H1 (cell line): ENCODE measurements at regions of chr17 and their contacts with region 1.

Region 1: DNA sequence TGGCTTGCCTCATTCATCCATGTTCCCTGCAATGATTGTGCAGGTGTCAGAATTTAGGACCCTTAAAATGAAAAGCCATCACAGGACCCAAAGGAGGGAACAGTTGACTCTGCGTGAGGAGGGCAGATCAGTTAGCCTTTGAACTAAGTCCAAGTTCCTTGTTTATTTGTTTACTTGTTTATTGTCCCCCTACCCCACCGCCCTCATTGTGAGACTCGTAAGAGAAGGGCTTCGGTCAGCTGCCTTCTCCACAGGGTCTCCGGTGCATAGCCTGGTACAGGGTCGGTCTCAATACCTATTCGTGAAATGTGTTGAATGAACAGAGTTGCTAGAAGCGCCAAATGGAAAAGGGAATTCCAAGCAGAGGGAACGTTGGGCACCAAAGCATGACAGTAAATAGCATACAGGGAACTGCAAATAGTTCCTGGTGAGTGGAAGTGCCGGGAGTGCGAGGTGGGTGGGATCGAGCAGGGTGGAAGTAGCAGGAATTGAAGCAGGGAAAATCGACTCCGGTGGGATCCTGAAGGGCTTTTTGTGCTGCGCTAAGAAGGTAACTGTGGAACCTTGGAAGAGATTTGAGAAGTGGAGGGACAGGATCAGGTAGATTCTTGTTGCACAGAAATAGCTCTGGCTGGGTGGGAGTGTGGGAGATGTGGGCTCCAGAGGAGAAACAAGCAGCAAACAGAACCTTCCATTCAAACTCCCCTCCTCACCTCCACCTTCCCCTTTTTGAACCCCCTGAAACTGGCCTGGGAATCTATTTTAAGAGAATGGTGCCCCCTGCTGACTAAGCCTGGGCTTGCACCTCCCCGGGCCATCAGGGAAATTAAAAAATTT is 12.7 kb downstream of the SLC35B1 start:
- DNase-seq: peak in 1 of 2 experiments; percentile 90
- H3K4me3 ChIP-seq: peak overlapping the region in 1 of 4 experiments; percentile 2; a peak in 1 of 8 replicates
- H3K27ac ChIP-seq: no peak overlapping the region
- H3K4me1 ChIP-seq: peaks cover 0 to 2% (median under 1%) of the 10 kb centered on the region in 4 experiments; a peak in 4 of 7 replicates
- H3K27me3 ChIP-seq: no peaks in the 10 kb centered on the region; a peak in 1 of 7 replicates
- CTCF ChIP-seq: peak; percentile 60 to 90 (median 79)
- EP300 ChIP-seq: no peak
- POLR2A ChIP-seq: no peak
- RAD21 ChIP-seq: peak; percentile 91 to 97

Region 2: DNA sequence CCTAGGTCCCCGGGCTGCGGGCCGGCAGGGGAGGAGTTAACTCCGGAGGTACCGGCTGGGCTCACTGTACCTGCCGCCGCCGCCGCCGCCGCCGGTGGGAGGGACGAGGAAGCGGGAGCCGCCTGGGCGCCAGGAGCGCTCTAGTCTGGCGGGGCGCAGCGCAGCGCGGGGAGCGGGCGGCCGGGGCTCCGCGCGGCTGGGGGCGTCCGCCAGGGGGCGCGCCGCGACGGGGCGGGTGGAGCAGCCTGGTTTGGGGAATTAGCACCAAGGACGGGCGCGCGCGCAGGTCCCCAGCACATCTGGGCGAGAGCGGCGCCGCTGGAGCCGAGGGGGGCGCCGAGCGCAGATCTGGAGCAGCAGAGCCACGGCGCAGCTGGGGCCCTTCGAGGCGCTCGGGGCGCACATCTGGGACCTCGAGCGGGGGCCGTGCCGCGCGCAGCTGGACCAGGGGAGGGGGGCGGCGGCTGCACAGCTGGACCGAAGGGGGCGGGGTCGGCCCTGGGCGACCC is 119.4 kb before region 1 on chr17 and contains the start of gene NXPH3:
- CTCF ChIA-PET with region 1: interaction called, 310 read pairs
- POLR2A ChIA-PET with region 1: interaction called, 12 read pairs
- DNase-seq: peak in 1 of 2 experiments; percentile 97
- H3K4me3 ChIP-seq: peak within 1 kb of the TSS; percentile 58 to 79 (median 72)
- H3K27ac ChIP-seq: no peak within 1 kb of the TSS; the same call in 1 of the 2 replicates
- H3K4me1 ChIP-seq: peaks cover 0 to 23% (median 10%) of the 10 kb centered on the region in 4 experiments; a peak in 6 of 7 replicates
- H3K27me3 ChIP-seq: peaks cover 4 to 14% (median 10%) of the 10 kb centered on the region in 4 experiments; a peak in 5 of 7 replicates
- CTCF ChIP-seq: peak; percentile 74 to 80 (median 76)
- EP300 ChIP-seq: peak in 1 of 2 experiments; percentile 60; a peak in 1 of 3 replicates
- POLR2A ChIP-seq: no peak
- RAD21 ChIP-seq: peak in 1 of 2 experiments; percentile 50; a peak in 2 of 4 replicates
- total RNA-seq, gene NXPH3: 3.3 and 3.7 TPM in 2 replicates

Region 3: DNA sequence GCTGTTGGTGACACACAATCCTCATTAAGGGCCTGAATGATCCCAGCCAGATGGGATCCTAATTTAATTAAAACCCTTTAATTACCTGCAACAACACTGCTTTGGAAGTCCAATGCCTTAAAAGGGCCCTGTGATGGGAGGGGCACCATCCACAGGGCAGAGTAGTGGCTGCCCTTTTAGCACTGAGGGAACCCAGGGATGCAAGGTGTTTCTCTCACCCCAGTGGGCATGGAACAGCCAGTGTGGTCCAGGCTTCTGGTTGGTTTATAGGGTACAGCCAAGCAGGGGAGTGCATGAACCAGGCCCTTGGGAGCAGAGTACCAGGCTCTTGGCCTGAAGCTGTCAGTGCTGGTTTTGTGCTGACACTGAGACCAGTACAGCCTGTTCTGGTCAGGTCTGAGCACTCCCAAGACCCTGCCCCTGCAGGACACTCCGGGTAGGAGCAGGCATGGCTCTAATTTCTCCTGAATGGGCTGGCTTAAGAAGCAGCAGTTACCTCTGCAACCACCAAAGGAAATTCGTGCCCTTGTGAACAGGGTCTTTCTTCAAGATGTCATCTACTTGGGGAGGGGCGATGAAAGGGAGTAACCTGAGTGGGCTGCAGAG is 109.5 kb before region 1 on chr17:
- CTCF ChIA-PET with region 1: interaction called, 10 read pairs
- POLR2A ChIA-PET with region 1: interaction called, 3 read pairs
- DNase-seq: no peak
- H3K4me3 ChIP-seq: no peak overlapping the region
- H3K27ac ChIP-seq: no peak overlapping the region
- H3K4me1 ChIP-seq: peaks cover 0 to 5% (median 2%) of the 10 kb centered on the region in 4 experiments; a peak in 3 of 7 replicates
- H3K27me3 ChIP-seq: no peaks in the 10 kb centered on the region; a peak in 1 of 7 replicates
- CTCF ChIP-seq: peak; percentile 66 to 80 (median 79)
- EP300 ChIP-seq: no peak
- POLR2A ChIP-seq: no peak
- RAD21 ChIP-seq: peak; percentile 25 to 39; a peak in 3 of 4 replicates

Region 4: GRCh38 chr17:49597928-49598655 is 97.0 kb before region 1 on chr17:
- CTCF ChIA-PET with region 1: interaction called, 11 read pairs
- POLR2A ChIA-PET with region 1: interaction called, 3 read pairs
- DNase-seq: no peak
- H3K4me3 ChIP-seq: no peak overlapping the region
- H3K27ac ChIP-seq: no peak overlapping the region
- H3K4me1 ChIP-seq: no peaks in the 10 kb centered on the region
- H3K27me3 ChIP-seq: no peaks in the 10 kb centered on the region
- CTCF ChIP-seq: no peak
- EP300 ChIP-seq: no peak
- POLR2A ChIP-seq: no peak
- RAD21 ChIP-seq: no peak

Region 5: DNA sequence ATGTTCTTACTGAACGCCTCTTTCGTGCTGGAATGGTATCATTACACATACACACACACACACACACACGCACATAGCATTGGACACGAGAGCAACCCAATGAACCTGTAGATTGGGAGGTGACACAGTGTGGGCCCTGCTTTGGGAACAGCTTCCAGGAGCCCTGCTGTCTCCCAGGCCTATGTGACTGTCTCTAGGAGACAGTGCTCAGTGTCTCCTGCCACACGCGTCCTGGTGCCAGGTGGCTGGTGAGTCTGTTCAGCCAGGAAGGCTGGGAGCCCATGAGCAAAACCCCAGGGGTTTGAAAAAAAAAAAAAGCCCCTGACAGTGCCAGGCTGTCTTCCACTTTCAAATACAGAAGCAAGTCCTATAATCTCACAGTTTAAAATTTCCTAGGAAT is 14.8 kb before region 1 on chr17:
- CTCF ChIA-PET with region 1: interaction called, 13 read pairs
- POLR2A ChIA-PET with region 1: interaction called, 8 read pairs
- DNase-seq: no peak
- H3K4me3 ChIP-seq: no peak overlapping the region
- H3K27ac ChIP-seq: no peak overlapping the region
- H3K4me1 ChIP-seq: no peaks in the 10 kb centered on the region; a peak in 1 of 7 replicates
- H3K27me3 ChIP-seq: peaks cover 0 to 2% (median 0%) of the 10 kb centered on the region in 4 experiments; a peak in 2 of 7 replicates
- CTCF ChIP-seq: no peak
- EP300 ChIP-seq: no peak
- POLR2A ChIP-seq: no peak
- RAD21 ChIP-seq: no peak

Region 6: DNA sequence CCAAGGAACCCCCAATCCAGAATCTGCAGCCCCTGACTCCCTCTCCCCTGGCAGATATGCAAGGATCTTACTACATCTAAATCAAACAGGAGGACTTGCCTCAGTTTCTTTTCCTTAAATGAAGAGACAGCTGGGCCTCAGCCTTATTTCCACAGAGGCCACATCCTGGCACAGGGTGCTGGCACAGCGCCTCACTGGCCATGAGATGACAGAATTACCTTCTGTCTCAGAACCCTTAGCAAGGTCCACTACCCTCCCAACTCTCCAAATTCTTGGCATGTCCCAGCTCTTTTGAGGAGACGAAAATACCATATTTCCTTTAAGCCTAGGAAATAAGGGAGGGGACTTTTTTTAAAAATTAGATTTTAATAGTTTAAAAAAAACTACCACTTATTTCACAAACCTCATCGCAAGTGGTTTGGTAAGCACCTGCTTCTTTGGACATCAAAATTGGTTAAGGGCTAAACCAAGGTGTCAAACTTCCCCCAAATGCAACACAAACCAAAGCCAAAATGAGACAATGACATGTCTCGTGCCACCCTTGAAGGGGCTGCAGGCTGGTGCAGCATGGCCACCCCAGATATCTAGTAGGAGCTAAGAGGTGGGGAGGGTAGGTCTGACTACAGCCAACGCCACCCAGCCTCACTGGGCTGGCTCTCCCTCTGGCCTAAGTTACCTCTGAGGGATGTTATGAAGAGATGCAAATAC is 43.5 kb after region 1 on chr17:
- CTCF ChIA-PET with region 1: no interaction called
- POLR2A ChIA-PET with region 1: no interaction called
- DNase-seq: no peak
- H3K4me3 ChIP-seq: no peak overlapping the region
- H3K27ac ChIP-seq: no peak overlapping the region
- H3K4me1 ChIP-seq: no peaks in the 10 kb centered on the region
- H3K27me3 ChIP-seq: no peaks in the 10 kb centered on the region
- CTCF ChIP-seq: no peak
- EP300 ChIP-seq: no peak
- POLR2A ChIP-seq: no peak
- RAD21 ChIP-seq: no peak

Region 7: DNA sequence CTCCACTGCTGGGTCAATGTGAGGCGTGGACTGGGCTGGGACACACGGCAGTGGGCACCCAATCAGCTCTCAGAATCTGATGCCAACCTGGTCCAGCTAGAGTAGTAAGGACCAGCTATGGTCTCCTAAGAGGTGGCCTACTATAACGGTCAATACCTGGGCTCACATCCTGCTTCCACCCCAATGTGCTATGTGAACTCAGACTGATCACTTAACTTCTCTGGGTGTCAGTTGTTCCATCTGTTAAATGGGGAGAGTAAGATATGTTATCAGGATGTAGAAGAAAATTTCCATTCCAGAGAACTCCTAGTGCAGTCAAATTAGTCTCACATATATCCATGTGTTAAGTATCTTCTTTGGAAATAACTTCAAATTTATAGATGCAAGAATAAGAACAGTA is 54.7 kb after region 1 on chr17:
- CTCF ChIA-PET with region 1: no interaction called
- POLR2A ChIA-PET with region 1: no interaction called
- DNase-seq: no peak
- H3K4me3 ChIP-seq: no peak overlapping the region
- H3K27ac ChIP-seq: no peak overlapping the region
- H3K4me1 ChIP-seq: peaks cover 0 to 2% (median 0%) of the 10 kb centered on the region in 4 experiments; a peak in 2 of 7 replicates
- H3K27me3 ChIP-seq: no peaks in the 10 kb centered on the region
- CTCF ChIP-seq: no peak
- EP300 ChIP-seq: no peak
- POLR2A ChIP-seq: no peak
- RAD21 ChIP-seq: no peak